ENCODE measurements at regions of chr9 and their contacts with region 1.

Region 1: GRCh38 chr9:14478175-14479162 is 164.5 kb upstream of the NFIB start:
- DNase-seq: no peak
- ATAC-seq: no peak

Region 2: DNA sequence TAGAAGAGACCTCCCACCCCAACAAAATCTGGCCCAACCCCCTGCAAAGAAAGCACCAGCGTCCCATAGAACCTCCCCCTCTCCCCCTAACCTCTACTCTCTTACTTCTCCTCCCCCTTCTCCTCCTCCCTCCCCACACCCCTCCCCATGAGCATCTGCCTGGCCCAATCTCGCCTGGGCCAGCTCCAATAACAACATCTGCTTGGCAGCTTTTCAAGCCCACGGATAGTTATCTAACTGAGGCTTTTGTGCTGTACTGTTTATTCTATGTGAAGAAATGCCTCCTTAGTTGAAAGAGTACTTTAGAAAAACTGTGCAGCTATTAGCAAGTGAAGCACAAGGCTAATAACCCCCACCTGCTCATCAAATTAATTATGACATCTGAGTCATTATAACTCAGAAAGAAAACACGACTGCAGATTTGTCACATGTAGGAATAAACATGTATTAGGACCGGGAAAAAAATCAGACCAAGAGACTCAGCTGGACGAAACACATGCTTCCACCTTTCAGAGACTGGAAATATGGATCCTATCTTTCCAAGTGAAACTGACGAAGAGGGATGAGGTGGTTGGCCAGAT is 207.3 kb before region 1 on chr9:
- intact Hi-C with region 1: no loop called
- DNase-seq: peak; percentile 28 to 44
- ATAC-seq: peak; percentile 39

Region 3: GRCh38 chr9:14524873-14525515 is 46.5 kb after region 1 on chr9:
- intact Hi-C with region 1: loop called in 1 of 2 experiments (anchors 5 kb)
- DNase-seq: no peak
- ATAC-seq: no peak

Measured in left colon (tissue), 2 donors.